Activated T-helper 1 cell treated with anti-CD3 and anti-CD28 coated beads, Interleukin-12 subunit alpha, Interleukin-12 subunit beta, Interleukin-2, Interleukin-4 antibody, amounts not matched to agents 30 ng/mL and 10 ng/mL and 1 ng/mL, durations not matched to agents 14 hours and 24 hours and 36 hours (primary cell): ENCODE measurements at regions of chr13 and their contacts with region 1.

Region 1: DNA sequence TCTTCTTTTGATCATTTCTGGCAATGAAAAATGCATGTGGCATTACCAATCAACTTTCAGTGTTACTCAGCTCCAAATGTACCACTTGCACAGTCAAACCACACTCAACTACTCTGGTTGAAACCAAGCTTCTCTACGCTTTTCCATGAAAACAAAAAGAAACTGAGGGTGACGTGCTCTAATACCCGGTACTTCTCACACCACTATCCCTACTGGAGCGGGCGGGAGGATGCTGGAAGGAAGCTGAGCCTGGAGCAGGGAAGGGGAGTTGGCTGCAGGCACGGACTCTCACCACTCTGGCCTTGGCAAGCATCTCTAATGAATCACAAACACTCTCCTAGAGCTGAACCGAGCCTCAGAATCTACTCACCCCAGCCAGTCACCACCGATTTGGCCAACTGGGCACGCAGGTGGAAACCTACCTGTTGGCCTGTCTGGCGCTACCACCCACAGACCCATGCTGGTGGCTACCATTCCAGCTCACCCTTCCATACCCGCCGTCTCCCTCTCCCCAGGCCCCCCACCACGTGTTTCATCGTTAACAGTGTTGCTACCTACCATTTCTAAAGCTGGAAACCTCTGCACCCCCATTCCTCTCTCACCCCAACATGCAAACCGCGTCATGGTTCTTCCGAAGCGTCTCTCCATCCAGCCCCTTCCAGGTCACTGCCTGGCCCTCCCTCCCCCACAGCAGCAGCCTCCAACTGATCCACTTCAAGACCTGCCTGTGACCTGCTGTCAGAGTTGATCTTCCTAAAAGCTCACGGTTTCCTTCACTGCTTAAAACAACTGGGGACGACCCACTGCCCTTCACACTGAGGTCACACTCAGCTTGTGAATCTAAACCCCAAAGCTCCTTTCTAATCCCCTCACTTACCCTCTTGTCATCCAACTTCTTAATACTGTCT is 48.0 kb downstream of the STK24 start:
- DNase-seq: no peak
- H3K4me3 Mint-ChIP-seq: peak overlapping the region; percentile 47
- H3K27ac Mint-ChIP-seq: peak overlapping the region; percentile 91
- H3K4me1 Mint-ChIP-seq: peaks cover 81% of the 10 kb centered on the region
- H3K27me3 Mint-ChIP-seq: no peaks in the 10 kb centered on the region

Region 2: GRCh38 chr13:98542568-98543377 is 13.9 kb after region 1 on chr13:
- intact Hi-C with region 1: loop called (anchors 2 kb)
- DNase-seq: no peak
- H3K4me3 Mint-ChIP-seq: peak overlapping the region; percentile 68
- H3K27ac Mint-ChIP-seq: peak overlapping the region; percentile 74
- H3K4me1 Mint-ChIP-seq: peaks cover 83% of the 10 kb centered on the region
- H3K27me3 Mint-ChIP-seq: no peaks in the 10 kb centered on the region